GM12878 (cell line): ENCODE measurements at regions of chr16 and their contacts with region 1.

Region 1: GRCh38 chr16:13401631-13402030 is 500.2 kb downstream of the SHISA9 start:
- DNase-seq: no peak
- ATAC-seq: no peak
- H3K4me3 ChIP-seq: no peak overlapping the region
- H3K27ac ChIP-seq: no peak overlapping the region
- H3K4me1 ChIP-seq: no peaks in the 10 kb centered on the region
- H3K27me3 ChIP-seq: no peaks in the 10 kb centered on the region
- CTCF ChIP-seq: no peak
- EP300 ChIP-seq: no peak
- POLR2A ChIP-seq: no peak
- RAD21 ChIP-seq: no peak

Region 2: DNA sequence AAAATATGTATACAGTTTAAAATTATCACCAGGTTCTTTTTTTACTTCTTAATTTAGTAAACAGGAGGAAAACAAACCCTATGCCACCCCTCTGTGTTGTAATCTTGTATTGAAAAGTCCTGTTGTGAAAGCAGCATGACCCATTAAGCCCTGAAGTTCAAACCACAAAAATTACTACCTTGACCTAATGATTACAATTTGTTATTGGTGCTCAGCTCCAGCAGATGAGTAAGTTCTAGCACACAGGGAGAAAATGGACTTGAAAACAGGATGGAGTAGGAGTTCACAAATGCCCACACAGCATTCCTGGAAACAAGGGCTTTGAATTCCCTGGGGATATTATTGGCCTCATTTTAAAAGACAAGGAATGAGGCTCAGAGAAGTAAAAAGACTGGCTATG is 12.5 kb after region 1 on chr16:
- CTCF ChIA-PET with region 1: interaction called, 3 read pairs
- POLR2A ChIA-PET with region 1: interaction called, 3 read pairs
- RAD21 ChIA-PET with region 1: no interaction called
- SMC1A ChIA-PET with region 1: interaction called, 10 read pairs
- in situ Hi-C with region 1: no loop called
- intact Hi-C with region 1: no loop called
- DNase-seq: no peak
- ATAC-seq: no peak
- H3K4me3 ChIP-seq: no peak overlapping the region
- H3K27ac ChIP-seq: no peak overlapping the region
- H3K4me1 ChIP-seq: no peaks in the 10 kb centered on the region
- H3K27me3 ChIP-seq: no peaks in the 10 kb centered on the region
- CTCF ChIP-seq: no peak
- EP300 ChIP-seq: no peak
- POLR2A ChIP-seq: no peak
- RAD21 ChIP-seq: no peak